Psoas muscle (tissue), 8 donors: ENCODE measurements at regions of chr22 and their contacts with region 1.

Region 1: GRCh38 chr22:34334893-34335292 is 414.6 kb upstream of the LARGE1 start:
- DNase-seq: no peak
- ATAC-seq: no peak
- H3K4me3 ChIP-seq: no peak overlapping the region
- H3K27ac ChIP-seq: no peak overlapping the region
- H3K4me1 ChIP-seq: no peaks in the 10 kb centered on the region
- H3K27me3 ChIP-seq: peaks cover 0 to 3% (median 0%) of the 10 kb centered on the region in 3 donors
- CTCF ChIP-seq: no peak

Region 2: DNA sequence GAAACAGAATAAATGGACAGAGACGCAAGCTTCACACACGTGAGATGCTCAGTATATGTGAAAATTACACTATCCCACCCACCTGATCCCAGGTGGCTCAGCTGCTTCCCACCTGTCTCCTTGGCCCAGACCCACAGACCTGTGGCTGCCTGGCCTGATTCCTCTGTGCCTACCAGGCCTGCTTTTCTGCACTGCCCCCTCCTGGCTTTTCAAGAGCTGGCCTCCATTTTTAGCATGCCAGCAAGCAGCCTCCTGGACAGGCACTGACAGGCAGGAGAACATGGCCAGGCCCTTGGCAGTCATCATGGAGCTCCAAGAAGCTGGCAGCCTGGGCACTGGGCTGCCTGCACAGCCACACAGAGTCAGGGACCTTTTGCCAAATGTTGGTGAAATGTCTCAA is 842.9 kb after region 1 on chr22:
- intact Hi-C with region 1: loop called in 1 of 2 experiments (anchors 10 kb)
- DNase-seq: no peak
- ATAC-seq: no peak
- H3K4me3 ChIP-seq: no peak overlapping the region
- H3K27ac ChIP-seq: no peak overlapping the region
- H3K4me1 ChIP-seq: no peaks in the 10 kb centered on the region
- H3K27me3 ChIP-seq: peaks cover 0 to 23% (median 4%) of the 10 kb centered on the region in 3 donors
- CTCF ChIP-seq: no peak